ENCODE measurements at regions of chr11 and their contacts with region 1.

Region 1: DNA sequence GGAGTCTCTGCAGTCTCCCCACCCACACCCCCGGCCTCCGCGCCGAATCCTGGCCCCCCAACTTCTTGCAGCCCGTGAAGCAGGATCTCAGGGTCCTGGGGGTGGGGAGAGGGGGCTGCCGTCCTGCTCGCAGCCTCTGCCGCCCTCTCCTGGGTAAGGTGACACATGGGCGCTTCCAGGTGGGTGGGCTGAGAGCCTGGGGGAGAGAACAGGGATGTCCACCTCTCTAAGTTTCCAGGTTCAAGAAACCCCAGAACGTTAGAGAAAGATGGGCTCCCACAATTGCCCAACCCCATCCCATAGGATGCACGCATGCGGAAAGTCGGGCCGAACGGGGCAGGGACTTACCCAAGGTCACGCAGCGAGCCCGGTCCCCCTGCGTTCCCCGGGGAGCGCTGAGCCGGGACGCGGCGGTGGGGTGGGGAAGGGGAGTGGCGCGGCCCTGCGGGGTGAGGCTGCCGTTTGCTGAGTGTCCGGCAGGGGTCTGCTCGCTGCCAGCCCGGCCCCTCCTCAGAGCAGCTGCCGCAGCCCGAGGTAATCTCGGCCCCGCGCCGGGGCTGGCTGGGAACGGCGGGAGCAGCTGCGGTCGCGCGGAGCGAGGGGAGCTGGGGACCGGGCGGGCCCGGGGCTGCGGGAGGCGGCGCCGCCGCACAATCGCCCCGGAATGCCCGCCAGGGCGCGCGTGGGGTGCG is 705 bp upstream of the CAPN1 start:
- DNase-seq: peak; percentile 80
- ATAC-seq: peak; percentile 52

Region 2: GRCh38 chr11:65134386-65135253 is 46.4 kb before region 1 on chr11 and contains the start of gene SYVN1:
- intact Hi-C with region 1: loop called (anchors 1 kb)
- DNase-seq: peak; percentile 95
- ATAC-seq: peak; percentile 93
- total RNA-seq, gene SYVN1: 27.1 TPM

Region 3: DNA sequence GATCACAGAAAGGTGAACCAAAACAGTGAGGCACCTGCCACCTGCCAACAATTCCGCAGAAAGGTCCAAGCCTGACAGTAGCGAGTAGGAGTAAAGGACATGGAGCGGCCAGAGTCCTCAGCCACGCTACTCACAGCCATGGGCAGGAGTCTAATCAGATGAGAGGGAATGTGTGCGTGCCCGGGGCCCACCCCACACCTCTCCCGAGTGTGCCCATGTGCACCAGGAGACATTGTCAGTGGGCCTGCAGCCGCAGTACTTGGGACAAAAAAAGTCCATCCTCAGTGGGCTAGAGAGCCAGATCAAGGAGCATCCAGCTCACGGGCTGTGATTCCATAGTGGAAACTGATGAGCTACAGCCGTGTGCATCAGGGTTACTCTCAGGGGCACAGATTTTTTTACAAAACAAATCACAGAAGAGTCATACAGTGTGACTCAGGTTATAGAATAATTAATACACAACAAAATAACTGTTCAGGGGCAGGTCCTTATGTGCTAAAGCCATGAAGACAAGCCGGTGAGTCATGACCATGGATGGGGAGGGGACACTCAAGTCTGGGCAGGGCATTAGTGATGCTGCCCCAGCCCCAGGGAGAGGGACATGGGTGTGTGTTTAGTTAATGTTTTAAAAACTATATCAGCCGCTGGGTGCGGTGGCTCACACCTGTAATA is 792.6 kb after region 1 on chr11:
- intact Hi-C with region 1: no loop called
- DNase-seq: no peak
- ATAC-seq: no peak